Mammary epithelial cell (primary cell): ENCODE measurements at regions of chr18 and their contacts with region 1.

Region 1: GRCh38 chr18:9743200-9744016 is 35.3 kb downstream of the RAB31 start:
- DNase-seq: peak; percentile 95
- H3K4me3 ChIP-seq: peak overlapping the region in 1 of 3 experiments; percentile 14
- H3K27ac ChIP-seq: peak overlapping the region; percentile 78
- H3K4me1 ChIP-seq: peaks cover 32% of the 10 kb centered on the region
- H3K27me3 ChIP-seq: no peaks in the 10 kb centered on the region
- CTCF ChIP-seq: no peak

Region 2: GRCh38 chr18:9779630-9780029 is 36.2 kb after region 1 on chr18:
- CTCF ChIA-PET with region 1: no interaction called
- dilution Hi-C with region 1: no loop called
- in situ Hi-C with region 1: no loop called
- intact Hi-C with region 1: no loop called
- DNase-seq: peak; percentile 60
- H3K4me3 ChIP-seq: no peak overlapping the region
- H3K27ac ChIP-seq: no peak overlapping the region
- H3K4me1 ChIP-seq: peaks cover 4% of the 10 kb centered on the region
- H3K27me3 ChIP-seq: no peaks in the 10 kb centered on the region
- CTCF ChIP-seq: no peak

Region 3: GRCh38 chr18:9827641-9828505 is 84.5 kb after region 1 on chr18:
- CTCF ChIA-PET with region 1: no interaction called
- dilution Hi-C with region 1: no loop called
- in situ Hi-C with region 1: no loop called
- intact Hi-C with region 1: loop called (anchors 5 kb)
- DNase-seq: peak; percentile 98
- H3K4me3 ChIP-seq: peak overlapping the region in 2 of 3 experiments; percentile 40 to 41
- H3K27ac ChIP-seq: peak overlapping the region; percentile 77
- H3K4me1 ChIP-seq: peaks cover 54% of the 10 kb centered on the region
- H3K27me3 ChIP-seq: no peaks in the 10 kb centered on the region
- CTCF ChIP-seq: no peak

Region 4: DNA sequence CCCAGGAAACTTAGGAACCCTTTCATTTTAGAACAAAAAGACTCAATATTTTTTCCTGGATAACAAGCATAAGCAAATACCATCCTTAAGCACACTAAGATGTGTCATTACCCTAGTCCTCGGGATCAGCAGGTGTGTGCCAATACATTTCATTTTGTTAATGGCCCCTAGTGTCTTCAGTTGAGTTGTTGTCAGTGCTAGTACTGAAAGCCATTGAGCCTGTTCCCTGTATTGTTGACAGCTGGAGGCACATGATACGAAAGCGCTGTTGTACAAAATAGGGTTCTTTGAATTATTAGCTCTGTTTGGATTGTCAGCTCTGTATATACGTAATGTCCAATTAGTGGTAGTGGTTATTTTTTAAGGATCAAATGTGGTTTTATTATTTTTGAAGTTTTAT is 199.9 kb after region 1 on chr18:
- CTCF ChIA-PET with region 1: no interaction called
- dilution Hi-C with region 1: no loop called
- in situ Hi-C with region 1: no loop called
- intact Hi-C with region 1: no loop called
- DNase-seq: no peak
- H3K4me3 ChIP-seq: no peak overlapping the region
- H3K27ac ChIP-seq: no peak overlapping the region
- H3K4me1 ChIP-seq: peaks cover 8% of the 10 kb centered on the region
- H3K27me3 ChIP-seq: no peaks in the 10 kb centered on the region
- CTCF ChIP-seq: no peak

Region 5: GRCh38 chr18:10002280-10002679 is 258.9 kb after region 1 on chr18:
- CTCF ChIA-PET with region 1: no interaction called
- dilution Hi-C with region 1: no loop called
- in situ Hi-C with region 1: no loop called
- intact Hi-C with region 1: no loop called
- DNase-seq: no peak
- H3K4me3 ChIP-seq: no peak overlapping the region
- H3K27ac ChIP-seq: no peak overlapping the region
- H3K4me1 ChIP-seq: no peaks in the 10 kb centered on the region
- H3K27me3 ChIP-seq: no peaks in the 10 kb centered on the region
- CTCF ChIP-seq: no peak